ENCODE measurements at regions of chr6 and their contacts with region 1.

Region 1: GRCh38 chr6:16471222-16471909 is 233.0 kb downstream of the GMPR start:
- DNase-seq: peak; percentile 76
- ATAC-seq: peak; percentile 71
- H3K4me3 ChIP-seq: 0 out of 2 replicates have a peak overlapping the region, but pooled peaks have one; percentile 9
- H3K27ac ChIP-seq: peak overlapping the region; percentile 90
- H3K4me1 ChIP-seq: peaks cover 71% of the 10 kb centered on the region
- H3K27me3 ChIP-seq: no peaks in the 10 kb centered on the region
- CTCF ChIP-seq: no peak
- EP300 ChIP-seq: peak; percentile 74 to 81; a peak in 3 of 4 replicates
- POLR2A ChIP-seq: peak; percentile 47; the same call in 1 of the 2 replicates
- RAD21 ChIP-seq: no peak

Region 2: DNA sequence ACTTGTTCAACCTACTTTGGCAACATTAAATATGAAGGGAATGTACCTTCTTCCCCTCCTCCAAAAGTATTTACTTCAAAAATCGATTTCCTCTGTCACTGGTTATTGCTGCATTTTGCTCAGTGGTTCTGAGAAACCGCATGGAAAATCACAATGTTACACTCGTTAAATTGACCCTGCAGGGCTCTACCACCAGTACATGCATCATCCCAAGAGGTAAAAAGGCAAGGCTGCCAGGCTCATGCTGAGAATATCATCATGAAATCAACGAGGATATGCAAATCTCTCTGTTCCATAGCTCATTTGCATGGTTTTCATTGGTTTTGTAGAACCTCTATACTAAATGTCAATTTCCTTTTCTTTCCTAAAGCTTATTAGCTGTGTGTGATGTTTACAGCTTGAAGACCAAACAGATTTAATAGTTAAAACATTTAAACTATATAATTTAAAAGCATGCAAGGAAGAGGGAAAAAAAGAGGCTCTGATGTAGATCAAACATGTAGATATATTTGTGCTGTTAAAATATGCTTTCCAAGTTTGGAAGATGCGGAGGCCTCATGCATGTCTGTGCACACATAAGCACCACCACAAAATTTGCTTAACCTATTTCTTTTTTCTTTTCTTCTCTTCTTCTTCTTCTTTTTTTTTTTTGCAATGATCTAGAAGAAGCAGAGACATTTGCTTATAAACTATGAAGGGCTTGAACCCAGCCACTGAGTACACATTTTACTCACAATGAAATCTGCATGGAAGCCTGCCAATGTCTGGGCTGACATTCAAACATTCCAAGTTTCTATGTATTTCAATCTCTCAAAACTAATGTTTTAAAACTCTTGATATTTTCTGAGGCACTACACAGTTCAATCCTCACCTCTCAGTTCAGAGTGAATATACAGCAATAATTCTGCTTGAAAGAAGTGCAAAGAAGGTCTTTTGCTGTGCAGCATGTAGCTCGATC is 39.0 kb before region 1 on chr6:
- CTCF ChIA-PET with region 1: interaction called, 12 read pairs
- POLR2A ChIA-PET with region 1: interaction called, 36 read pairs
- RAD21 ChIA-PET with region 1: interaction called, 48 read pairs
- SMC1A ChIA-PET with region 1: interaction called, 314 read pairs
- in situ Hi-C with region 1: no loop called
- intact Hi-C with region 1: no loop called
- DNase-seq: peak; percentile 77
- ATAC-seq: peak; percentile 78
- H3K4me3 ChIP-seq: peak overlapping the region; percentile 14; the same call in 1 of the 2 replicates
- H3K27ac ChIP-seq: peak overlapping the region; percentile 39
- H3K4me1 ChIP-seq: peaks cover 45% of the 10 kb centered on the region
- H3K27me3 ChIP-seq: no peaks in the 10 kb centered on the region
- CTCF ChIP-seq: no peak
- EP300 ChIP-seq: 0 out of 4 replicates have a peak, but pooled peaks of 1 of the 2 experiments have one; percentile 7
- POLR2A ChIP-seq: no peak
- RAD21 ChIP-seq: 0 out of 2 replicates have a peak, but pooled peaks have one; percentile 1

Region 3: DNA sequence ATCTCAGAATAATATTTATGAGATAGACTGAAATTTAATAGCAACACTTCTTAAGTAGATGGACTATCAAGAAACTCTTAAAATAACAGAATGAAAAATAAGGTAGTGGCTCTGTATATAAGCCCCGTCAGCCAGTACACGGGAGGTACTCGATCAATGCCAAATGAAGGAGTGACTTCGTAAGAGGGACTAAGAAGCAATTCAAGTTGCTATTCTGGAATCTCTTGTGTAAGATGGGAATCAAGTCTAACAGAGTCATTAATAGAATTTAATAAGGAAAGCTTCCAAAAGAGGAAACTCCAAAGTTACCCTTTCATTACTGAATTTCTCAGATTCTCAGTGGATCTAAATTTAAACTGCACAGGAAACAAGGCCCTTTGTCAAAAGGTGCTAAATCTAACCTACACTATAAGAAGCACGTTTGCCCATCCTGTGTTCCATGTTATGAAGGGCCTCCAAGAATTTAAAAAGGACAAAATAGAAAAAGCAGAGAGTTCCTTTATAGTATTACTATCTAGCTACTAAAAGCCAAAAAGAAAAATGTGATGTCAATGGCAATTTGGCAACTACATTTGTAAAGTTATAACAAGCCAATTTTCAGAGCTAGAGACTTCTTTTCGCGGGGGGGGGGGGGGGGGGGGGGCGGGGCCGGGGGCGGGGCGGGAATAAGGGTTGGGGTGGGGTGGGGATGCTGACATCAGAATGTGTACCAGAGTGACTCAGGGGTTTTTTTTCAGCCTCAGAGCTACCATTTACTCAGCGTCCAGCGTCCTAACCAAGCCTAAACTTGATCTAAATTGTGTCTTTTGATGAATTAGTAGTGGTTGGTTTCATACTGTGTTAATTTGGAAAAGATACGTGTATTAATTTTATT is 32.4 kb before region 1 on chr6:
- CTCF ChIA-PET with region 1: interaction called, 10 read pairs
- POLR2A ChIA-PET with region 1: interaction called, 36 read pairs
- RAD21 ChIA-PET with region 1: interaction called, 48 read pairs
- SMC1A ChIA-PET with region 1: interaction called, 314 read pairs
- in situ Hi-C with region 1: no loop called
- intact Hi-C with region 1: loop called (anchors 2 kb)
- DNase-seq: peak; percentile 53
- ATAC-seq: peak; percentile 78
- H3K4me3 ChIP-seq: no peak overlapping the region
- H3K27ac ChIP-seq: peak overlapping the region; percentile 70
- H3K4me1 ChIP-seq: peaks cover 41% of the 10 kb centered on the region
- H3K27me3 ChIP-seq: no peaks in the 10 kb centered on the region
- CTCF ChIP-seq: no peak
- EP300 ChIP-seq: no peak
- POLR2A ChIP-seq: no peak
- RAD21 ChIP-seq: no peak

Region 4: DNA sequence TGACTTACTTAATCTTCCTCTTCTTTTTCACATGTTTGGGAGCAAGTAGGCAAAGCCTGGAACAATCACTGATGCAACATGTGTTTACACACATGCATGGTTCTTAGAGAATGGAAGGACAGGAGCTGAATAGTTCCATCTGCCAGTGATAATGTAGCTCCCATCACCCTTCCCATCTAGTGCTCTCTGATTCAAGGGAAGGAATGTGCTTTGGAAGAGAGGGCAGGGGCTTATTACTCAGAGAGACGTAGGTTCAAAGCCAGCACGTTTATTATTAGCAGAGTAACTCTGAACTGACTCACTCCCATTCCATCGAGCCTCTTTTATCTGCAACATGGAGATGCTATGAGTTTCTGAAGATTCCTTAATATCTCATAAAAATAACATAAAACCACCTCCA is 21.1 kb before region 1 on chr6:
- CTCF ChIA-PET with region 1: interaction called, 10 read pairs
- POLR2A ChIA-PET with region 1: interaction called, 5 read pairs
- RAD21 ChIA-PET with region 1: interaction called, 12 read pairs
- SMC1A ChIA-PET with region 1: interaction called, 37 read pairs
- in situ Hi-C with region 1: no loop called
- intact Hi-C with region 1: no loop called
- DNase-seq: no peak
- ATAC-seq: no peak
- H3K4me3 ChIP-seq: no peak overlapping the region
- H3K27ac ChIP-seq: no peak overlapping the region
- H3K4me1 ChIP-seq: peaks cover 3% of the 10 kb centered on the region; the same call in 1 of the 2 replicates
- H3K27me3 ChIP-seq: no peaks in the 10 kb centered on the region
- CTCF ChIP-seq: no peak
- EP300 ChIP-seq: no peak
- POLR2A ChIP-seq: no peak
- RAD21 ChIP-seq: no peak

Region 5: DNA sequence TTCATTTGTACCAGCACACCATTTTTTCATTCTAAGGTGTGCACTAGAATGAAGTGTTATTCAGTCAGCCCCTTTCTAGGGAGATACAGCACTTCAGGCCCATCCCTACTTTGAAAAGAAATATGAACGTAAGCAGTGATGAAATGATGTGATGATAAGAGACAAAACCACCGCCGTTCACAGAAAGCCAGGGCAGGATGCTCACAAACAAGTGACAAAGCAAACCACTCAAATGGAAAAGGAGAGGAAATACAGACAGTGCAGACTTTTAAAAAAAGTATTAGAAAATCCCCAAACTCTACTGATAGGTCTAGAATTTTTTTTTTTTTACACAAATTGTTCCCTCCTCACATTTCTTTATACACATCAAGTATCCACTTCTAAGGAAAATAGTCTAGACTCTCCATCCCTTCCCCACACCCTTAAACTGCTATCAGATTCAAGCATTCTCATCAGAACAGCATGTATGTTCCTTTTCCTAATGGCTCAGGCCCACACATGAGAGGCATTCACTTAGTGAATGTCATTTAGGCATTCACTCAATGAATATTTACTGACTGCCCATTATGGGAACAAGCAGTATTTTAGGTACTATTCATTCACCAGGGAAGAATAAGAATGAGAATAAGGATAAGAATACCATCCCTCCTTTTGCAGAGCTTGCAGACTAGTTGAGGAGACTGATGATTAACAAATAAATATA is 10.5 kb after region 1 on chr6:
- CTCF ChIA-PET with region 1: interaction called, 155 read pairs
- POLR2A ChIA-PET with region 1: interaction called, 256 read pairs
- RAD21 ChIA-PET with region 1: interaction called, 201 read pairs
- SMC1A ChIA-PET with region 1: interaction called, 388 read pairs
- in situ Hi-C with region 1: no loop called
- intact Hi-C with region 1: loop called (anchors 1 kb)
- DNase-seq: no peak
- ATAC-seq: peak; percentile 61
- H3K4me3 ChIP-seq: peak overlapping the region; percentile 20; the same call in 1 of the 2 replicates
- H3K27ac ChIP-seq: peak overlapping the region; percentile 83
- H3K4me1 ChIP-seq: peaks cover 65% of the 10 kb centered on the region
- H3K27me3 ChIP-seq: no peaks in the 10 kb centered on the region
- CTCF ChIP-seq: no peak
- EP300 ChIP-seq: peak; percentile 68 to 77; a peak in 3 of 4 replicates
- POLR2A ChIP-seq: no peak
- RAD21 ChIP-seq: peak; percentile 3; the same call in 1 of the 2 replicates

Region 6: DNA sequence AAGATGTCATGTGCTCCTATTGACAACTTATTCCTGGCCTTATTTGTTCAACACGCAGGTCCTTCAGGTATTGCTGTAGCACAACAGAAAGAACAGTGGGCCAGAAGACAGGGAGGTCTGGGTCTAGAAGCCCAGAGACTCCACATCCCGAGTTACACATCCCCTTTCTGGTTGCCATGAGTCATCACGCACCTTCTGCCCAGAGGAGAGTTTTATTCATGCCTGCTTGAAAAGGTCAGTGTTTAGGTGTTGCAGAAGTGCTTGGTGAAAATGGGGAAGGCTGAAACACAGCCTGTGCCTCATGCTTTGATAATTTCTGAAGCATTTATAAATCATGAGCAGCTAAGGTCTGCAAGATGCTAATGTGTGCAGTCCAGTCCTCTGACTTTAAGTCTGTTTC is 23.4 kb after region 1 on chr6:
- CTCF ChIA-PET with region 1: interaction called, 155 read pairs
- POLR2A ChIA-PET with region 1: interaction called, 256 read pairs
- RAD21 ChIA-PET with region 1: interaction called, 201 read pairs
- SMC1A ChIA-PET with region 1: interaction called, 388 read pairs
- in situ Hi-C with region 1: no loop called
- intact Hi-C with region 1: no loop called
- DNase-seq: peak; percentile 90
- ATAC-seq: peak; percentile 75
- H3K4me3 ChIP-seq: peak overlapping the region; percentile 3; the same call in 1 of the 2 replicates
- H3K27ac ChIP-seq: peak overlapping the region; percentile 85
- H3K4me1 ChIP-seq: peaks cover 60% of the 10 kb centered on the region
- H3K27me3 ChIP-seq: no peaks in the 10 kb centered on the region
- CTCF ChIP-seq: no peak
- EP300 ChIP-seq: peak in 1 of 2 experiments; percentile 87; a peak in 3 of 4 replicates
- POLR2A ChIP-seq: no peak
- RAD21 ChIP-seq: no peak